Endothelial cell of umbilical vein (primary cell): ENCODE measurements at regions of chr2 and their contacts with region 1.

Region 1: DNA sequence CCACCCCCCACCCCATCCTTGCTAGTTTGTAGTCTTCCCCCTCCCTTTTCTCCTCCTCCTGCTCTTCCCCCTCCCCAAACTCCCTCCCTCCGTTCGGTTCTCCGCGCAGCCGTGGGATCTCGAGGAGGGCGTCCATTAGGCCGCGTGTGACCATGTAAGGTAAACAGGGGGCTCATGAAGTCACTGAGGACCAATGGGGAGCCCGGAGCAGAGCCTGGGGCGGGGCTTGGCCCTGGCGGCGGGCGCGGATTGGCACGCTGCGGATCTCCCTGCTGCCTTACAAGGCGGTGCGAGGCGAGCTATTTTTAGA is 246 bp upstream of the KLF7 start:
- DNase-seq: peak; percentile 100
- H3K4me3 ChIP-seq: peak overlapping the region in 1 of 3 experiments; percentile 91
- H3K27ac ChIP-seq: peak overlapping the region; percentile 97
- H3K4me1 ChIP-seq: peaks cover 29% of the 10 kb centered on the region
- H3K27me3 ChIP-seq: no peaks in the 10 kb centered on the region
- CTCF ChIP-seq: no peak
- POLR2A ChIP-seq: no peak

Region 2: GRCh38 chr2:206989306-206989705 is 176.7 kb before region 1 on chr2:
- CTCF ChIA-PET with region 1: interaction called, 5 read pairs
- POLR2A ChIA-PET with region 1: interaction called, 3 read pairs
- dilution Hi-C with region 1: no loop called
- intact Hi-C with region 1: loop called (anchors 2 kb)
- DNase-seq: peak; percentile 19
- H3K4me3 ChIP-seq: no peak overlapping the region
- H3K27ac ChIP-seq: no peak overlapping the region
- H3K4me1 ChIP-seq: no peaks in the 10 kb centered on the region
- H3K27me3 ChIP-seq: no peaks in the 10 kb centered on the region
- CTCF ChIP-seq: peak; percentile 66 to 90
- POLR2A ChIP-seq: no peak

Region 3: DNA sequence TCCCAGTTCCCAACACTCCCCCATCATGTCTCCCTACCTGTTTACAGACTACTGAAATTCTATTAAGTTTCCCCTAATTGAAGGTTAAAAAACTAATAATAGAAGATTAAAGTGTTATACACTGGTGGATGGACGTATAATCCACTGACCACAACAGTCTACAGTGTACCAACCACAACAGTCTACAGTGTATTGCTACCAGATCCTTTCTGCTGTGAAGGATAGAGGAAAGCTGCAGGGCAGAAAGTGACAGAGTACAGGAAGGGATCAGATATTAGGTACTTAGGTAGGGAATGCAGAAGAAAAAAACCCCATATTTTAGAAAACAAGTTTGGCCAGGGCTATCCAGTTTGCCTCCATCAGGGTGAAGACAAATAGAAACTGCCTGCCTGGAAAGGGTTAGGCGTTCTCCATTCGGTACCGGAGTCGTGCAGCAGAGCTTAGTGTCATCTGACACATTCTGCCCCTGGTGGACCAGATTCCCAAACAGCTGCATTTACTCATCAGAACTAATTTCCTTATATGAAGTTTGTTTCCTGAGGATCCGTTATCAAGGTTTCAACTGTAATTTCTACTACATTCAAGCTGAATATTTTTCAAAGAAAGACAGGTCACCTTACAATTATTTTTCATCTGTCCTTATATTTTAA is 50.2 kb before region 1 on chr2:
- CTCF ChIA-PET with region 1: no interaction called
- POLR2A ChIA-PET with region 1: no interaction called
- dilution Hi-C with region 1: no loop called
- intact Hi-C with region 1: loop called (anchors 1 kb)
- DNase-seq: peak; percentile 36
- H3K4me3 ChIP-seq: no peak overlapping the region
- H3K27ac ChIP-seq: no peak overlapping the region
- H3K4me1 ChIP-seq: peaks cover 17% of the 10 kb centered on the region
- H3K27me3 ChIP-seq: no peaks in the 10 kb centered on the region
- CTCF ChIP-seq: peak; percentile 3 to 4
- POLR2A ChIP-seq: peak; percentile 43

Region 4: DNA sequence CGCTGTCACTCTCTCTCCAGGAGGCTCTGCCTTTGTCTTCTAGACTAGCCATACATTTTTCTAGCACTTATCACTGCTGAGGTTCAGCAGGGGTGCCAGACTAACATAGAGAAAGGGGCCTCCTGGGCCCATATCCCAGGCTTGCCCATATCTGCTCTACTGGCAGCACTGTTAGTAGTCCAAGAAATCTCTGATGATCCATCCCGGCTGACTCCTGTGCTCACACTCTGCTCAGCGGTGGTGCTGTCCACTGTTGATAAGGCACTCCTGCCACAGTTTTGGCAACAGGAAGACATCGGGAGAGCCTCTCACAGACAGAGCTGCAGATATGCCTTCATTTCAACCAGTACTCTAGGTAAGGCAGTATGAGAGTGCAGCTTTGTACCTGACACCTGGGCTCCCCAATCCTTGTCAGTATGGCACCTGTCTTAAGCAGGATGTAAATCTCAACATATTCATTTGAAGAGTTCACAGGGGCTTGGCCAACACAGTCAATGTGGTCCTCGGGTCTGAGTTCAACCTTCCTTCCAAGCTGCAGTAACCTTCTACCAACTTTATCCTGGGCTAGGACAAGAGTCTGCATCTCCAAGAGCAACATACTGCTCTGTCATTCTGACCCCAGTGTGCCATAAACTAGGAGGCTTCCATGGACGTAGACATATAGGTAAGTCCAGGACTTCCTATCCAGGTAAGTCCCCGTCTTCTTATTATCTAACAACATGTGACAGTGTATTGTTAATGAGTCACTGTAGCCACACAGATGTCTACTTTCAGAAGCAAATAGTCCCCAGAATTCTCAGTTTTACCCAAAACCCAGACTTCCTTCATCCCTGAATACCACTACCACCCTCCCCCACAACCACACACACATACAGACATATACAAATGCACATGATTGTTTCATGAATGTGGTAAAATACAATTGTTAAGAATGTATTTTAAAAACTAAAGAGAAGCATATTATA is 16.5 kb before region 1 on chr2:
- CTCF ChIA-PET with region 1: interaction called, 23 read pairs
- POLR2A ChIA-PET with region 1: interaction called, 22 read pairs
- dilution Hi-C with region 1: no loop called
- intact Hi-C with region 1: loop called (anchors 1 kb)
- DNase-seq: peak; percentile 44
- H3K4me3 ChIP-seq: no peak overlapping the region
- H3K27ac ChIP-seq: no peak overlapping the region
- H3K4me1 ChIP-seq: peaks cover 62% of the 10 kb centered on the region
- H3K27me3 ChIP-seq: no peaks in the 10 kb centered on the region
- CTCF ChIP-seq: no peak
- POLR2A ChIP-seq: no peak

Region 5: GRCh38 chr2:207206011-207206410 is 40.0 kb after region 1 on chr2:
- CTCF ChIA-PET with region 1: no interaction called
- POLR2A ChIA-PET with region 1: no interaction called
- dilution Hi-C with region 1: no loop called
- intact Hi-C with region 1: no loop called
- DNase-seq: no peak
- H3K4me3 ChIP-seq: no peak overlapping the region
- H3K27ac ChIP-seq: no peak overlapping the region
- H3K4me1 ChIP-seq: no peaks in the 10 kb centered on the region
- H3K27me3 ChIP-seq: no peaks in the 10 kb centered on the region
- CTCF ChIP-seq: no peak
- POLR2A ChIP-seq: no peak

Region 6: DNA sequence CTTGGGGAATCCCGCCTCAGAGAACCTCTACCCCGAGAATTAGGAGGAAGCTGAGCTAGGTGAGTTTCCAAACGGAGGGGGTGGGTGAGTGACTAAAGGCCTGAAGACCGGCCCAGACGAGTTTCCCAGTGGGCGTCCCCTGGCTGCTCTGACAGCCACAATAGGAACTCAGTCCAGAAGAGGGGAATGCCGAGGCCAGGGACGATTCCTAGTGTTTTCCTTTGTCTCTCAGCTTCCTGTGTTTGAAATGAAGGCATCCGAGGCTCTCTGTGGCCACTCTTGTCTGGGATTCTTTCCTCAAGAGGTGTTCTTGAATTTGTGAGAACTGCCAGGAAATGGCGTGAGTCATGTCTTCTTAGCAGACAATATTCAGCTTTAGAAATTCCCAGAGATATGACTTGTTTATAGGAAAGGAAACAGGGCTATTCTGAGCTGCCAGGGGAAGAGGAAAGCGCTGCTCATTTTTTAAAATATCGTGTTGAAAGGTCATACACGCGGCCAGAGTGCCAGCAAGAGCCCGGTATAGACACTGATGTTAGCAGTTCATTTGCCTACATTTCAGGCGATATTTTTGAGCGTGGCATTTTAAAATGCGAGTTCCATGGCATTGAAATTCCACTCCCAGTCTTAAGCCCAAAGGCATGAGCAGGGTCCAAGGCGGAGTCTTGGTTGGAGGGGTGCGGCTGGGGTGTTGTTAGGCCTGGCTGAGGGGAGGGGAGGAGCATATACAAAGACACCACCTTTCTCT is 168.8 kb after region 1 on chr2:
- CTCF ChIA-PET with region 1: interaction called, 8 read pairs
- POLR2A ChIA-PET with region 1: interaction called, 18 read pairs
- dilution Hi-C with region 1: no loop called
- intact Hi-C with region 1: loop called (anchors 1 kb)
- DNase-seq: peak; percentile 99
- H3K4me3 ChIP-seq: peak overlapping the region in 1 of 3 experiments; percentile 60
- H3K27ac ChIP-seq: peak overlapping the region; percentile 99
- H3K4me1 ChIP-seq: peaks cover 53% of the 10 kb centered on the region
- H3K27me3 ChIP-seq: no peaks in the 10 kb centered on the region
- CTCF ChIP-seq: no peak
- POLR2A ChIP-seq: peak; percentile 24

Region 7: DNA sequence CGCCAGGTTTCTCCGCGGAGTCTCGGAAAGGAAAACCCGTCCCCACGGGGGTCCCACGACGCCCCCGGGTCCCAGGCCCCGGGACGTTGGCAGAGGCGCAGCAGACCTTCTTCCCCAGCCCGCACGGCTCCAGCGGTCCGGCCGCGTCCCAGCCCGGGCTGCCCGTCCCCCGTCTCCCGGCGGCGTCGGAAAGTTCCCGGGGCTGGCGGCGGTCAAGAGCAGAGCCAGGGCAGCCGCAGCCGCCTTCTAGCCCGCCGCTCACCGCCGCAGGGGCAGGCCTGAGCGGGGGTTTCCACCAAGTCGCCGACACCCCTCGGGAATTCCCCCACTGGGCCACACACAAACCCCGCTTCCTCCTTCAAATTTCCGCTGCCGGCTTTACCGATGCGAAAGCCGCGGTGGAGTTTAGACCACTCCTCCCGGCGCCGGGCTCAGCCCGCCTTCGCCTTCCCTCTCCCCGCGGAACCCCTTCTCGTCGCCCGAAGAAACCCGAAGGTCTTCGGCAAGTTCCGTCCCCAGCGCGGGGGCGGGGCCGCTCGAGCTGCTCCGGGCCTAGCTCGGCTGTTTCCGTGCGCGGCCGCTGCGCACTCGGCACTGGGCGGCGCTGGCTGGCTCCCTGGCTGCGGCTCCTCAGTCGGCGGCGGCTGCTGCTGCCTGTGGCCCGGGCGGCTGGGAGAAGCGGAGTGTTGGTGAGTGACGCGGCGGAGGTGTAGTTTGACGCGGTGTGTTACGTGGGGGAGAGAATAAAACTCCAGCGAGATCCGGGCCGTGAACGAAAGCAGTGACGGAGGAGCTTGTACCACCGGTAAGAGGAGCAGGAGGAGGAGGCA is 363.6 kb after region 1 on chr2 and contains the start of gene CREB1:
- CTCF ChIA-PET with region 1: interaction called, 3 read pairs
- POLR2A ChIA-PET with region 1: no interaction called
- dilution Hi-C with region 1: no loop called
- intact Hi-C with region 1: loop called (anchors 1 kb)
- DNase-seq: peak; percentile 99
- H3K4me3 ChIP-seq: peak within 1 kb of the TSS; percentile 79 to 98 (median 91)
- H3K27ac ChIP-seq: peak within 1 kb of the TSS; percentile 95
- H3K4me1 ChIP-seq: peaks cover 28% of the 10 kb centered on the region
- H3K27me3 ChIP-seq: no peaks in the 10 kb centered on the region
- CTCF ChIP-seq: no peak
- POLR2A ChIP-seq: no peak
- total RNA-seq, gene CREB1: 69.3 and 71.1 TPM in 2 replicates